Aorta (tissue), 5 donors: ENCODE measurements at regions of chr17 and their contacts with region 1.

Region 1: DNA sequence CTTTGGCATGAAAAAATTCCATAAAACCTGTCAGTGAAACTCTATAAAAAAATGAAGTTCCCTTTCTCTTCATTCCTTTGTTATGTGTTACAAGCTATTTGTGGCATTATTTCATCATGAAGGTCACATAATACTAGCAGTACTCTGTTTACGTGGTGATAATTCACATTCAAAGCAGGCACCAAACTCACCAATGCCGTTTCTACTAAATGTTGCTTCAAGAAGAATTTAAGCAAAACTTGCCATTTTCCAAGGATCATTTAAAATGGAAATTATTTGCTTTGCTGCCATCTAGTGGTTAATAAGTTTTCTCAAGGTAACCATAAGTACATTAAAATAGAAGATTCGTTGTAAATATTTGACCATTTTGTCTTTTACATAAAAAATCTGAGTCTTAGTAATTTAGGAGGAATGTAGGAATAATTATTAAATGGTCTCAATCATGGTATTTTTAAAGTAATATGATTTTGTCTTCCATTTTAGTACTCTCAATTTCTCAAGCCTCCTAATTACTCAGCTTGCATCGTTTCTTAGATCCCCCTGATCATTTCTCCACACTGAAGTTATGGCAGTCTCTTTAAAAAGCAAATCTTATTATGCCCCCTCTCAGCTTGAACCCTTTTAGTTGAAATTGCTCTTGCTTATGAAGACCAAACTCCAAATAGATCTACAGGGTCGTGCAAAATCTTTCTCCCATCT is 80.8 kb downstream of the OMG start:
- DNase-seq: no peak
- ATAC-seq: no peak
- H3K4me3 ChIP-seq: no peak overlapping the region
- H3K27ac ChIP-seq: no peak overlapping the region
- H3K4me1 ChIP-seq: no peaks in the 10 kb centered on the region
- H3K27me3 ChIP-seq: no peaks in the 10 kb centered on the region

Region 2: GRCh38 chr17:31013844-31014243 is 202.4 kb before region 1 on chr17:
- intact Hi-C with region 1: loop called (anchors 5 kb)
- DNase-seq: no peak
- ATAC-seq: no peak
- H3K4me3 ChIP-seq: no peak overlapping the region
- H3K27ac ChIP-seq: no peak overlapping the region
- H3K4me1 ChIP-seq: peaks cover 3% of the 10 kb centered on the region in 2 donors
- H3K27me3 ChIP-seq: no peaks in the 10 kb centered on the region

Region 3: DNA sequence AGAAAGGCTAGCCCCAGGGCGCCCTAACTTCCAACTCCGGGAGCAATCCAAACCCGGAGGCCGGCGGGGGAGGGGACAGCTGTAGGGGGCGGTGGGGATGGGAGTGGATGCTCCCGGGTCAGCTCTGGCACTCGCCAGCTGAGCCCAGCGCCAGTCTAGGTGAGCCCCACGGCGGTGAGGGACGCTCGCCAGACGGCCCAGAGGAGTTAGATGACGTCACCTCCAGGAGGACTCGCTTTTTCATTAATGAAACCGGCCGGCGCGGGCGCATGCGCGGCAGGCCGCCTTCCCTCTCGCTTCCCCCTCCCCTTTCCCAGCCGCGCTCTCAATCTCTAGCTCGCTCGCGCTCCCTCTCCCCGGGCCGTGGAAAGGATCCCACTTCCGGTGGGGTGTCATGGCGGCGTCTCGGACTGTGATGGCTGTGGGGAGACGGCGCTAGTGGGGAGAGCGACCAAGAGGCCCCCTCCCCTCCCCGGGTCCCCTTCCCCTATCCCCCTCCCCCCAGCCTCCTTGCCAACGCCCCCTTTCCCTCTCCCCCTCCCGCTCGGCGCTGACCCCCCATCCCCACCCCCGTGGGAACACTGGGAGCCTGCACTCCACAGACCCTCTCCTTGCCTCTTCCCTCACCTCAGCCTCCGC is 121.5 kb before region 1 on chr17 and contains the start of gene NF1:
- intact Hi-C with region 1: loop called in 1 of 2 experiments (anchors 10 kb)
- DNase-seq: peak; percentile 98 to 99
- ATAC-seq: peak; percentile 97
- H3K4me3 ChIP-seq: peak within 1 kb of the TSS; percentile 71 to 86
- H3K27ac ChIP-seq: peak within 1 kb of the TSS; percentile 64 to 77
- H3K4me1 ChIP-seq: peaks cover 0 to 5% of the 10 kb centered on the region in 2 donors
- H3K27me3 ChIP-seq: no peaks in the 10 kb centered on the region
- total RNA-seq, gene NF1: 74.5 to 93.9 TPM

Region 4: DNA sequence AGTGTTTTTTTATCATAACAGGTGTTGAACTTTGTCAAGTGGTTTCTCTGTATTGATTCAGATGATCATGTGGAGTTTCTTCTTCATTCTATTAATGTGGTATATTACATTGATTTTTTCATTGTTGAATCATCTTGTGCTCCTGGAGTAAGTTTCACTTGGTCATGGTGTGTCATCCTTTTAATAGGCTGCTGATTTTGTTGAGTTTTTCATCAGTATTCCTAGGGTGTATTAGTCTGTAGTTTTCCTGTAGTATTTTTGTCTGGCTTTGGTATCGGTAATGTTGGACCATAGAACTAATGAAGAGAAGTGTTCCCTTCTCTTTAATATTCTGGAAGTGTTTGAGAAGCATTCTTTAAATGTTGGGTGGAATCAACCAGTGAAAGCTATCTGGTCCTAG is 18.2 kb before region 1 on chr17:
- intact Hi-C with region 1: no loop called
- DNase-seq: no peak
- ATAC-seq: no peak
- H3K4me3 ChIP-seq: no peak overlapping the region
- H3K27ac ChIP-seq: no peak overlapping the region
- H3K4me1 ChIP-seq: no peaks in the 10 kb centered on the region
- H3K27me3 ChIP-seq: no peaks in the 10 kb centered on the region